ENCODE measurements at regions of chr1 and their contacts with region 1.

Region 1: DNA sequence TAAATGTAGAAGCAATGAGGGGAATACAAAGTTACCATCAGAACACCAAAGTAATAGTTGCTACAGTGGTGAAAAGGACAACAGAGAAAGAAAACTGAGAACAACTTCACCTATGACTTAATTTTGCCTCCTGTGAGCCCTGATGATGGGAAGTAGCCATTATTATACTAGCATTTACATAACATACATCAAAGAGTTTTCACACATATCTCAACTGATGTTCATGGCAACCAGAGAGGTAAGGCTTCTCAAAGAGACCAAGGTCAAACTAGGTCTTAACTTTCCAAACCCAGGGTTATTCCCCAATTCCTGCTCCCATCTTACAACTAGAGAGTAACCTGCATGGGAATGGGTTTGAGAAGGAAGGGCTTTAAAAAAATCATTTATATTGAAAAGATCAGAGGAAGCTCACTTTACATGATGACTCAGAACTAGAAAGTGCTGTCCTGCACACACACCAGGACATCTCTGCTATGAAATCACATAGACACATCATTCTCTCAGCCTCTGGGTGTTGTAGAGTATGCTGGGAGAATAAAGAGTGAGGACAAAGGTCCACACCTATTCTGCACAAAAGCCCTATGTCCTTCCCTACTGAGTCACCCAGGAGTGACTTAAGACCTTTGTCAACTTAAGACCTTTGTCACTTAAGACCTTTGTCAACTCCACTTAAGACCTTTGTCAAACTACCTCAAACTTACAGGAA is 179.7 kb downstream of the TNFSF18 start:
- DNase-seq: no peak
- H3K4me3 Mint-ChIP-seq: no peak overlapping the region
- H3K27ac Mint-ChIP-seq: no peak overlapping the region
- H3K4me1 Mint-ChIP-seq: peaks cover 34% of the 10 kb centered on the region
- H3K27me3 Mint-ChIP-seq: peaks cover 41% of the 10 kb centered on the region

Region 2: DNA sequence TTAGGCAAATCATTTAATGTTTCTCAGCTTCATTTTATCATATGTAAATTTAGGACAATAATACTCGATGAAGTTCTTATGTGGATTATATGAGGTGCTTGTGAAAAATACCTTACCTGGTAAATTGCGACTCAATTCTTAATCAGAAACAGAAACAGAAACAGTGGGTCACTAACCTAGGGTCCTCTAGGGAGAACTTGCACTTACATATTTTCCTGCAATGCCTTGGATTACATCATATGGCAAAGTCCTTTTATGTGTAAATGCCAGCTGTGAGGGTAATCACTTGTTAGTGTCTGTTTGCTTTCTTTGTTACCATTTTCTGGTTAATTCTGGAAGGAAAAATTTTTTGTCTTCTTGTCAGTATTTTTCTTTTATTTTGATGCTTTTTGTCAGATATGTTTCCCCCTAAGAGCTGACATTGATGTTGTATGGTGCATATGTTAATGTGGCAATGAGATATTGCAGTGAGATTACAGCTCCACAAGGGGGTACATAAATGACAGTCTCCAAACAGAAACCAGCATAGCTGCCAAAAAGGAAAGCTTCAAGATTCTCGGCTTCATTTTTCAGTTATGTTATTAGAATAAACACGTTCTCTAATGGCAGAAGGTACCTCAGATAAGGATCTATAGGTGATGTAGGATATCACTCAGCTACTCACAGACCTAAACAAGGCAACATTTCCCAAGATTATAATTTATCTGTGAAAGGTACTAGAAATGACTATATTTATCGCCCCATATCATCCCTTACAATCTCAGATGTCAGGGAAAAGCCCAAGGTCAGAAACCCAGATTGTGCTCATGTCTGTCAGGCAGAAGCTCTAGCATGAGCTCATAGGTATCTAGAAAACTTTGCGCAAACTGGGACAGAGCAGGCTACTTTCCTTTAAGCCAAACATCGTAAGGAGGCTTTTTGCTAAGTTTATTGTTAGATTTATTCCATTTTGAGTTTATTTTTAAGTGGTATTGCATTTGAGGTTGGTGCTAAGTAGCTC is 92.3 kb before region 1 on chr1:
- intact Hi-C with region 1: loop called (anchors 1 kb)
- DNase-seq: no peak
- H3K4me3 Mint-ChIP-seq: no peak overlapping the region
- H3K27ac Mint-ChIP-seq: no peak overlapping the region
- H3K4me1 Mint-ChIP-seq: peaks cover 16% of the 10 kb centered on the region
- H3K27me3 Mint-ChIP-seq: peaks cover 31% of the 10 kb centered on the region

Region 3: DNA sequence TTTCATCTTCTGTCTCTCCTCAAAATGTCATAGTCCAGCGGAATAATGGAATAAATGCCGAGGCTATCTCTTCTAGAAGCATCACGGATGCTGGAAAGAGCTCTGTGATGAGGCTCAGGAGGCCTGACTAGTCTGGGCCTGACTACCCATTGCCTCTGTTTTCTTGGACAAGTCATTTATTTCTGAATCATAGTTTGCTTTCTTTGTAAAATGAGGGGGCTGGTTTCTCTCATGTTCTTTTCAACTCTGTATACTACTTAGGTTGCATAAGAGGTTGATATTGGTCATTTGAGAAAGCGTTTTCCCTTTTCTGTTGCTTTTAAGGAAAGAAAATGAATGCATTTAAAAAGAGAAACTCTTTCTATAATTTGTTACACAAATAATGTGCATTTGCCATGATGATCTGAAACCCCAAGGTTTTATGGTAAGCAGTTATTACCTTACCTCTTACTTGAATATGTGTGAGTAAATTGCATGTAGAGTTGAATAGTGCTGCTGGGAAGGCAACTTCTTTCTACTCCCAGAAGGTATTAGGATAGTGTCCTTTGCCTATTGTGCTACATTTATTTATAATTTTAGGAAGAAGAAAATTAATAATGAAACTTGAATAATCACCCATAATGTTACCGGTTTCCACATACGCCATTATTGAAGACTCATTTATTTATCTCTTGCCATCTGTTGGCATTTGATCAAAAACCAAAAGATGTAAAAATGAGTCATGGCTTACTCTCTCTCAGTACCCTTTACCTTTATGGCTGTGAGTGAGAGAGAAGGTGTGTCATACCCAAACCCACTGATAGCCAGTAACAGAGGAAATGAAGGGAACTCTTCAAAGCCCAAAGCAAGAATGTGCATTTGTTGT is 33.0 kb before region 1 on chr1:
- intact Hi-C with region 1: loop called (anchors 1 kb)
- DNase-seq: no peak
- H3K4me3 Mint-ChIP-seq: no peak overlapping the region
- H3K27ac Mint-ChIP-seq: no peak overlapping the region
- H3K4me1 Mint-ChIP-seq: peaks cover 29% of the 10 kb centered on the region
- H3K27me3 Mint-ChIP-seq: peaks cover 53% of the 10 kb centered on the region

Region 4: GRCh38 chr1:172845371-172845770 is 25.7 kb before region 1 on chr1:
- intact Hi-C with region 1: loop called (anchors 1 kb)
- DNase-seq: peak; percentile 22
- H3K4me3 Mint-ChIP-seq: no peak overlapping the region
- H3K27ac Mint-ChIP-seq: peak overlapping the region; percentile 53
- H3K4me1 Mint-ChIP-seq: peaks cover 18% of the 10 kb centered on the region
- H3K27me3 Mint-ChIP-seq: peaks cover 47% of the 10 kb centered on the region

Region 5: GRCh38 chr1:172883107-172883791 is 12.2 kb after region 1 on chr1:
- intact Hi-C with region 1: loop called (anchors 1 kb)
- DNase-seq: no peak
- H3K4me3 Mint-ChIP-seq: no peak overlapping the region
- H3K27ac Mint-ChIP-seq: peak overlapping the region; percentile 18
- H3K4me1 Mint-ChIP-seq: peaks cover 19% of the 10 kb centered on the region
- H3K27me3 Mint-ChIP-seq: peaks cover 67% of the 10 kb centered on the region

Region 6: DNA sequence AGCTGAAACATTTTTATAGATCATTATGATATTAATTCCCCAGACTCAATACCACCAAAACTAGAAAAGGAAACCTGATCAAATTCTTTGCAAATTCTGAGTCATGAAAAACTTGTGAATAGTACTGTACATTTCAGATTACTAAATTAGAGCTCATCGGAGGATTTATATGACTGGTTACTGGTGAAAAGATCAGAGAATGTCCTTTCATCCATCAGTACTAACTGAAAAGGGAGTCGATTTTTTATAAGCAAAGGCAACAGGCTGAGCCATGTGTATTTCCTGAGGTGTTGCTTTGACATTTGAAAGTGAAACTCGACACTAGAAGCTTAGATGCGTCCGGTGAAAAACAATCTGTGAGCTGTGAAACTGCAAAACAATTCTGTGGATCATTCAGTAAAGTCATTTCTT is 24.0 kb after region 1 on chr1:
- intact Hi-C with region 1: loop called (anchors 1 kb)
- DNase-seq: peak; percentile 20
- H3K4me3 Mint-ChIP-seq: peak overlapping the region; percentile 59
- H3K27ac Mint-ChIP-seq: peak overlapping the region; percentile 0
- H3K4me1 Mint-ChIP-seq: peaks cover 39% of the 10 kb centered on the region
- H3K27me3 Mint-ChIP-seq: peaks cover 46% of the 10 kb centered on the region

Measured in activated T-helper 2 cell treated with anti-CD3 and anti-CD28 coated beads, Interferon-gamma antibody, Interleukin-2, Interleukin-4, amounts not matched to agents 10 μg/mL and 5 μg/mL and 100 μg/mL, durations not matched to agents 14 hours and 24 hours and 36 hours (primary cell).